Activated CD4-positive, alpha-beta memory T cell treated with anti-CD3 and anti-CD28 coated beads, Interleukin-2, amount 10 ng/mL, durations not matched to agents 7 days and 5 days (primary cell): ENCODE measurements at regions of chrX and their contacts with region 1.

Region 1: GRCh38 chrX:129754056-129755024 is 15.6 kb downstream of the XPNPEP2 start:
- DNase-seq: no peak
- H3K4me3 Mint-ChIP-seq: no peak overlapping the region
- H3K27ac Mint-ChIP-seq: peak overlapping the region; percentile 86
- H3K4me1 Mint-ChIP-seq: peaks cover 55% of the 10 kb centered on the region
- H3K27me3 Mint-ChIP-seq: no peaks in the 10 kb centered on the region

Region 2: GRCh38 chrX:129631849-129632248 is 122.5 kb before region 1 on chrX:
- CTCF ChIA-PET with region 1: no interaction called
- POLR2A ChIA-PET with region 1: no interaction called
- DNase-seq: no peak
- H3K4me3 Mint-ChIP-seq: no peak overlapping the region
- H3K27ac Mint-ChIP-seq: no peak overlapping the region
- H3K4me1 Mint-ChIP-seq: no peaks in the 10 kb centered on the region
- H3K27me3 Mint-ChIP-seq: no peaks in the 10 kb centered on the region

Region 3: GRCh38 chrX:129726307-129727111 is 27.8 kb before region 1 on chrX:
- CTCF ChIA-PET with region 1: interaction called, 13 read pairs
- POLR2A ChIA-PET with region 1: no interaction called
- DNase-seq: peak; percentile 30
- H3K4me3 Mint-ChIP-seq: no peak overlapping the region
- H3K27ac Mint-ChIP-seq: no peak overlapping the region
- H3K4me1 Mint-ChIP-seq: peaks cover 37% of the 10 kb centered on the region
- H3K27me3 Mint-ChIP-seq: no peaks in the 10 kb centered on the region

Region 4: DNA sequence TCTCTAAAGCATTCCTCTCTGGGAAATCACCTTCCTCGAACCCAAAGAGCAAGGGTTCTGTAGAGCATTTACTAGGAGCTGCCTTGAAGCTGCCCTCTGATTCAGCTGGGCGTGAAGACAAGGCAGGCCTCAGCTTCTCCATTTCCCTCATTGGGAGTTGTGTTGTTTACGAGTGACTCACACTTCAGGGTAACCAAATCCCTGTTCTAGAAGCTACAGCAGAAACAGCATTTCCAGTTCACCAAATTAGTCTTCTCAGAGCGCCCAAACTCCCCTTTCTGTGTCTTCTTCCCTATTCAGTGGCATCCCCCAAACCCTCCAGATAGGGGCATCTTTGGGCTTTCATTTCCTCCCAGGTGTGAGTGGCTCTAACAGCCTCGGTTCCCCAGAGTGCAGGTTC is 16.4 kb before region 1 on chrX:
- CTCF ChIA-PET with region 1: interaction called, 14 read pairs
- POLR2A ChIA-PET with region 1: interaction called, 45 read pairs
- DNase-seq: no peak
- H3K4me3 Mint-ChIP-seq: no peak overlapping the region
- H3K27ac Mint-ChIP-seq: peak overlapping the region; percentile 54
- H3K4me1 Mint-ChIP-seq: peaks cover 45% of the 10 kb centered on the region
- H3K27me3 Mint-ChIP-seq: no peaks in the 10 kb centered on the region

Region 5: GRCh38 chrX:129772796-129773431 is 18.6 kb after region 1 on chrX:
- CTCF ChIA-PET with region 1: interaction called, 31 read pairs
- POLR2A ChIA-PET with region 1: interaction called, 354 read pairs
- DNase-seq: peak; percentile 58
- H3K4me3 Mint-ChIP-seq: peak overlapping the region; percentile 58
- H3K27ac Mint-ChIP-seq: peak overlapping the region; percentile 95
- H3K4me1 Mint-ChIP-seq: peaks cover 86% of the 10 kb centered on the region
- H3K27me3 Mint-ChIP-seq: no peaks in the 10 kb centered on the region

Region 6: DNA sequence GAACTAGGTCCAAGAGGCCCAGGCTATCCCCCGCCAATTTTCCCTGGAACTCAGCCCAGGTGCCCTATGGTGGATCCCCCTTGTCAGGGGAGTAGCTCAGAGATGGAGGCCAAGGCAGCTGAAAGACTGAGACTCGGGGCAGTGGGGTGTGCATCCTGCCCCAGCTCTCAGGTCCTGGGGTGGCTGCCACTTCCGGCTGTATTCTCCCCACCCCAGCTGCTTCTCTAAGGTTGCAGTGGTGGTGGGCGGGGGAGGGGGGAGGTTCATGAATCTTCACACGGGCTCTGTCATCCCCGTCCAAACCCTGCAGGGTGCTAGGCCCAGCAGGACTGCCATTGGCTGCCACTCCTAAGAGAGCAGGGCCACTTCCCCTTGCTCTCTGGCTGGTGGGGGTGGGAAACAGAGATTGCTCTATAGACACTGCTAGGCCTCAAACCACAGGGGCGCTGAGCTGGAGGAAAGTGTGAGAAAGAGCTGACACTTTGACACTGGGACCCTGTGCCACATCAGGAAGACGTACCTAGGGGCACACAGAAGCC is 26.9 kb after region 1 on chrX:
- CTCF ChIA-PET with region 1: interaction called, 38 read pairs
- POLR2A ChIA-PET with region 1: interaction called, 354 read pairs
- DNase-seq: peak; percentile 89
- H3K4me3 Mint-ChIP-seq: peak overlapping the region; percentile 81
- H3K27ac Mint-ChIP-seq: peak overlapping the region; percentile 92
- H3K4me1 Mint-ChIP-seq: peaks cover 62% of the 10 kb centered on the region
- H3K27me3 Mint-ChIP-seq: no peaks in the 10 kb centered on the region